Activated naive CD4-positive, alpha-beta T cell treated with anti-CD3 and anti-CD28 coated beads for 36 hours (primary cell): ENCODE measurements at regions of chr14 and their contacts with region 1.

Region 1: GRCh38 chr14:32076278-32077080 is 625 bp upstream of the ARHGAP5 start:
- DNase-seq: peak; percentile 81
- H3K4me3 Mint-ChIP-seq: peak overlapping the region; percentile 95
- H3K27ac Mint-ChIP-seq: peak overlapping the region; percentile 89
- H3K4me1 Mint-ChIP-seq: peaks cover 31% of the 10 kb centered on the region
- H3K27me3 Mint-ChIP-seq: peaks cover 2% of the 10 kb centered on the region

Region 2: GRCh38 chr14:30621940-30622830 is 1454.3 kb before region 1 on chr14 and contains the start of gene SCFD1:
- CTCF ChIA-PET with region 1: no interaction called
- intact Hi-C with region 1: loop called (anchors 10 kb)
- DNase-seq: peak; percentile 95
- H3K4me3 Mint-ChIP-seq: peak within 1 kb of the TSS; percentile 96
- H3K27ac Mint-ChIP-seq: peak within 1 kb of the TSS; percentile 94
- H3K4me1 Mint-ChIP-seq: peaks cover 35% of the 10 kb centered on the region
- H3K27me3 Mint-ChIP-seq: no peaks in the 10 kb centered on the region
- total RNA-seq, gene SCFD1: 46.1 to 55.2 TPM

Region 3: GRCh38 chr14:31420319-31421111 is 656.0 kb before region 1 on chr14 and contains the start of gene HEATR5A:
- CTCF ChIA-PET with region 1: no interaction called
- intact Hi-C with region 1: loop called (anchors 1 kb)
- DNase-seq: peak; percentile 90
- H3K4me3 Mint-ChIP-seq: peak within 1 kb of the TSS; percentile 91
- H3K27ac Mint-ChIP-seq: peak within 1 kb of the TSS; percentile 82
- H3K4me1 Mint-ChIP-seq: peaks cover 17% of the 10 kb centered on the region
- H3K27me3 Mint-ChIP-seq: no peaks in the 10 kb centered on the region
- total RNA-seq, gene HEATR5A: 3.5 to 6.0 TPM

Region 4: DNA sequence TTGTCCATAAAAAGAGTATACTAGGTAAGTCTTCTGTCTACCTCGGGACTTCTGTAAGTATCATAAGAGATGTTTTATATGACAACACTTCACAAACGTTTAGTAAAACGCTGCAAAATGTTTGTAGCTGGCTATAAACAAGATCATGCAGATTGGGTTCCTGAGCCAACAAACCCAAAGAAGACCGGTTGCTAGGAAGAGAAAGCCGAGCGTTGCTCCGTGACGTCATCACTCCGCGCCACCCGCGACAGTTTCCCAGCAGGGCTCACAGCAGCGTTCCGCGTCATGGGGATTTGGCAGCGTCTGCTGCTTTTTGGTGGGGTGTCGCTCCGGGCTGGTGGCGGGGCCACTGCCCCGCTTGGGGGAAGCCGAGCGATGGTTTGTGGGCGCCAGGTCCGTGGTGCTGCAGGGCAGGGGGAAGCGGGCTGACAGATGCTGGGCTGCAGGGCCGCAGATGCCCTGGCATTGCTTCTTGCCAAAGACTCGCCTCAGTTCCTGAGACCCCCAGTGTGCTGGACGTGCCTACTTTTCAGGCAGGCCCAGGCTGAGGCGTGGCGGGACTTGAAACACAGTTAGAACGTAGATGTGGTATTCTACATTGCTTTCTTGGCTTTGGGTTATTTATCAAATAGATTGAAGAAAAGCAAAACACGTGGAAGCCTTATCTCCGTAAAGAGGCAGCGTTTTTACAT is 515.2 kb before region 1 on chr14 and contains the start of gene NUBPL:
- CTCF ChIA-PET with region 1: no interaction called
- intact Hi-C with region 1: loop called (anchors 1 kb)
- DNase-seq: peak; percentile 98
- H3K4me3 Mint-ChIP-seq: peak within 1 kb of the TSS; percentile 96
- H3K27ac Mint-ChIP-seq: peak within 1 kb of the TSS; percentile 92
- H3K4me1 Mint-ChIP-seq: peaks cover 23% of the 10 kb centered on the region
- H3K27me3 Mint-ChIP-seq: no peaks in the 10 kb centered on the region
- total RNA-seq, gene NUBPL: 11.5 to 13.5 TPM

Region 5: DNA sequence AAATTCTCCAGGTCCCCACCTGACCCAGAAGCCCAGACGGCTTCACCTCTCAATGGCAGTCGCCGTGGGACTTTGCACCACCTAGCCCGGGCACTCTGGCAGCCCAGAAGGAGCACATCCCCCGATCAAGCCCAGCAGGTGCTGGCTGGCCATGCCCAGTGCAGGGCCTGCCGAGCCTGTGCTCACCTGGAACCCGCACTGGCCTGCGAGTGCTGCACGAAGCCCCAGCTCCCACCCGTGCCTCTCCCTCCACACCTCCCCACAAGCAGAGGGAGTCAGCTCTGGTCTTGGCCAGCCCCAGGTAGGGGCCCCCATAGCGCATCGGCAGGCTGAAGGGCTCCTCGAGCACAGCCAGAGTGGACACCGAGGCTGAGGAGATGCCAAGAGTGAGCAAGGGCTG is 370.7 kb before region 1 on chr14:
- CTCF ChIA-PET with region 1: no interaction called
- intact Hi-C with region 1: no loop called
- DNase-seq: no peak
- H3K4me3 Mint-ChIP-seq: no peak overlapping the region
- H3K27ac Mint-ChIP-seq: no peak overlapping the region
- H3K4me1 Mint-ChIP-seq: no peaks in the 10 kb centered on the region
- H3K27me3 Mint-ChIP-seq: no peaks in the 10 kb centered on the region

Region 6: GRCh38 chr14:31726337-31726736 is 350.1 kb before region 1 on chr14:
- CTCF ChIA-PET with region 1: no interaction called
- intact Hi-C with region 1: no loop called
- DNase-seq: no peak
- H3K4me3 Mint-ChIP-seq: no peak overlapping the region
- H3K27ac Mint-ChIP-seq: no peak overlapping the region
- H3K4me1 Mint-ChIP-seq: no peaks in the 10 kb centered on the region
- H3K27me3 Mint-ChIP-seq: no peaks in the 10 kb centered on the region

Region 7: DNA sequence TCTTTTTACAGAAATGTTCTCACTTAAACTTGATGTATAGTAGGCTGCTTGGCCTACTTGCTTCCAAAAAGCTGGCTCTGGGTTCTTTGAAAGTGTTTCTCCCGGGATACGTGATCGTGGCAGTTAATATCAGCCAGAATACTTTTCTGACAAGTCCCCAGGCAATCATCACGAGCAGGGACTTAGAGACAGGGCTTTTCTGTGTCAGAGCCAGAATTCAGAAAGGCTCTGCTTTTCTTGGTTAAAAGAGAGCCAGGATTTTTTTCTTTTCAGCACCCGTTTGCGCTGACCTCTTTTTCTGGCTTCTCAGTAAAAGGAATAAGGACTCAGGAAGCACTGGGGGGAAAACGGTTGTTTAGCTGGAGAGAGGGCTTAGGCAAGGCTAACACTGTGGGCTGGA is 57.2 kb before region 1 on chr14:
- CTCF ChIA-PET with region 1: no interaction called
- intact Hi-C with region 1: no loop called
- DNase-seq: no peak
- H3K4me3 Mint-ChIP-seq: no peak overlapping the region
- H3K27ac Mint-ChIP-seq: no peak overlapping the region
- H3K4me1 Mint-ChIP-seq: no peaks in the 10 kb centered on the region
- H3K27me3 Mint-ChIP-seq: no peaks in the 10 kb centered on the region

Region 8: DNA sequence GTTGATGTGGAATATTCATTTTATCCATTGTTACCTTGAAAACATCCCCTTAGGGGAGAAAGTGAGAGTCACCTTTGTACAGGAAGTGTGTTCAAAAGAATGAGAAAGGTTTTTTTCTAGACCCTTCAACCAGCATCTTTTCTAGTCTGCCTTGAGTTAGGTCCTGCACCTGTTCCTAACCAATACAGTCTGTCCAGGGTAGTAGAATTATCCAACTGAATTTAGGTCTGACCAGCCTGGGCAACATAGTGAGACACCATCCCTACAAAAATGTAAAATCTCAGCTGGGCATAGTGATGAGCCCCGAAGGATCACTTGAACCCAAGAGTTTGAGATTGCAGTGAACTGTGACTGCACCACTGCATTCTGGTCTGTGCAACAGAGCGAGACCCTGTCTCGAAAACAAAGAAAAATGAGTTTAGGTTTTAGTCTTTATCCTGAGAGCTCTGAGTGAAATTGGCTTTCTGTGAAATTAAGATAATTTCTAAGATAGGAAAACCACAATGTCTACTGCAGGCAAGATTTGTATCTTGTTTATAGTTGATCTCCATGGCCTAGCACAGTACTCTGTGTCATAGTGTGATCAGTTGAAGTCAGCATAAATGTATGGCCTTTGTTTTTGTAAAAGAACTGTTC is 25.8 kb after region 1 on chr14:
- CTCF ChIA-PET with region 1: interaction called, 4 read pairs
- intact Hi-C with region 1: loop called (anchors 1 kb)
- DNase-seq: peak; percentile 16
- H3K4me3 Mint-ChIP-seq: peak overlapping the region; percentile 5
- H3K27ac Mint-ChIP-seq: peak overlapping the region; percentile 71
- H3K4me1 Mint-ChIP-seq: peaks cover 40% of the 10 kb centered on the region
- H3K27me3 Mint-ChIP-seq: no peaks in the 10 kb centered on the region

Region 9: DNA sequence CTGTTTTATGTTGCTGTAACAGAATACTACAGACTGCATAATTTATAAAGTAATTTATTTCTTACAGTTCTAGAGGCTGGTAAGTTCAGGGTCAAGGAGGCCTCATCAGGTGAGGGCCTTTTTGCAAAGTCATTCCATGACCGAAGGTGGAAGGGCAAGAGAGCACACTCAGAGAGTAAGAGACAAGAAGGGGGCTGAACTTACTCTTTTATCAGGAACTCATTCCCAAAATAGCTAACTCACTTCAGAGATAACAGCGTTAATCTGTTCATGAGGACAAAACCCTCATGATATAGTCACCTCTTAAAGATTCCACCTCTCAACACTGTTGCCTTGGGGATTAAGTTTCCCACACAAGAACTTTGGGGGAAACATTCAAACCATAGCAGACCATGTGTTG is 73.9 kb after region 1 on chr14:
- CTCF ChIA-PET with region 1: no interaction called
- intact Hi-C with region 1: no loop called
- DNase-seq: no peak
- H3K4me3 Mint-ChIP-seq: no peak overlapping the region
- H3K27ac Mint-ChIP-seq: no peak overlapping the region
- H3K4me1 Mint-ChIP-seq: no peaks in the 10 kb centered on the region
- H3K27me3 Mint-ChIP-seq: no peaks in the 10 kb centered on the region

Region 10: GRCh38 chr14:32252030-32252670 is 175.7 kb after region 1 on chr14:
- CTCF ChIA-PET with region 1: interaction called, 159 read pairs
- intact Hi-C with region 1: loop called (anchors 1 kb)
- DNase-seq: peak; percentile 64
- H3K4me3 Mint-ChIP-seq: no peak overlapping the region
- H3K27ac Mint-ChIP-seq: no peak overlapping the region
- H3K4me1 Mint-ChIP-seq: no peaks in the 10 kb centered on the region
- H3K27me3 Mint-ChIP-seq: no peaks in the 10 kb centered on the region

Region 11: DNA sequence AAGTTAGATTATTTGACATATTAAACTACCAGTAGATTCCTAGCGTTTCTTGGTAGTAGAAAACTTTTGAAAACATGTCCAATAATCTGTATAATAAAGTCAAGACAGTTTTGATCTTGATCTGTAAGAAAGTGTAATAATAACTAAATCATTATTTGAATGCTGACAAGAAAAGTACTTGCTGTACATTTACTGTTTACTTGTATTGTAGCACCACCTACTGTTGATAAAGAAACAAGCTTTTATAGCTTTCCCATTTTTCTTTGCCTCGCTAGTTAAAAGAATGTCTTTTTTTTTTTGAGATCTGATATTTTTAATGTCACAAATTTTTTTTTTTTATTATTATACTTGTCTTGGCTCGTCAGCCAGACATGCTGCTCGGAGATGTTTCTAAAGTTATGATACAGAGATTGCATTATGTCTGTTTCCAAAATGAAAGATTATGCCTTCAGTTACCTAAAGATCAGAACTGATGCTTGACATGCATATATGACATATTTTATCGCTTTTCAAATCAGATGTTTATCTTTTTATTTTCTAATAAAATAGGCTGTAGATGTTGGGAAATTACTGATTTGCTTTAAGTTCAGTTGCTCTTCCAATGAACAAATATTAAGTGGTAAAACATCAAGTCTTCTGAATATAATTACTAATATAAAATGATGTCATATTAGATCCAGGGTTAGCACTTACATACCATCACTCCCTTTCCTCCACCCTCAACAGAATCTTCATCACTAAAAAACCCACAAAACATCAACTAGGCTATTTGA is 393.1 kb after region 1 on chr14:
- CTCF ChIA-PET with region 1: interaction called, 3 read pairs
- intact Hi-C with region 1: loop called (anchors 1 kb)
- DNase-seq: no peak
- H3K4me3 Mint-ChIP-seq: no peak overlapping the region
- H3K27ac Mint-ChIP-seq: no peak overlapping the region
- H3K4me1 Mint-ChIP-seq: no peaks in the 10 kb centered on the region
- H3K27me3 Mint-ChIP-seq: no peaks in the 10 kb centered on the region